H1 (cell line): ENCODE measurements at regions of chr4 and their contacts with region 1.

Region 1: GRCh38 chr4:140326395-140326993 is 47.0 kb upstream of the SCOC start:
- DNase-seq: no peak
- H3K4me3 ChIP-seq: no peak overlapping the region
- H3K27ac ChIP-seq: no peak overlapping the region
- H3K4me1 ChIP-seq: no peaks in the 10 kb centered on the region
- H3K27me3 ChIP-seq: no peaks in the 10 kb centered on the region
- CTCF ChIP-seq: peak; percentile 11 to 63 (median 63)
- EP300 ChIP-seq: no peak
- POLR2A ChIP-seq: no peak
- RAD21 ChIP-seq: peak; percentile 77 to 81

Region 2: DNA sequence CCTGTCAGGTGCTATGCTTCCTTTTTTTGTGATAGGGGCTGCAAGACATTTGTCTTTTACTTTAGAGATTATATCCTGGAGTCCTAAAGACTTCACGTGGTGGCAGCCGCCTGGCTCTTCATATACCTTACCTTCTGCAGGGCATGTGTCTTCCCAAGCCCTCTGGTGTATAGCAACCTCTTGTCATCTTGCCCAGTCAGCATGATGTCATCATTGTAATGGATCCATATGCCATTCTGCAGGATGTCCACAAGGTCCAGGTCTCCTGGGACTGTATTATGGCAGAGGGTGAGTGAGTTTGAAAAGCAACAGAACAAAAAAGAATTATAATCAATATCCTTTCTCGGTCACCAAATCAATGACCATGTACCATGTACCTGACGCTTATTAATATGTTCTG is 35.2 kb before region 1 on chr4:
- CTCF ChIA-PET with region 1: interaction called, 10 read pairs
- POLR2A ChIA-PET with region 1: no interaction called
- DNase-seq: no peak
- H3K4me3 ChIP-seq: no peak overlapping the region
- H3K27ac ChIP-seq: no peak overlapping the region
- H3K4me1 ChIP-seq: no peaks in the 10 kb centered on the region
- H3K27me3 ChIP-seq: no peaks in the 10 kb centered on the region
- CTCF ChIP-seq: no peak
- EP300 ChIP-seq: no peak
- POLR2A ChIP-seq: no peak
- RAD21 ChIP-seq: no peak

Region 3: GRCh38 chr4:140308366-140309123 is 17.9 kb before region 1 on chr4:
- CTCF ChIA-PET with region 1: interaction called, 40 read pairs
- POLR2A ChIA-PET with region 1: no interaction called
- DNase-seq: no peak
- H3K4me3 ChIP-seq: no peak overlapping the region
- H3K27ac ChIP-seq: no peak overlapping the region
- H3K4me1 ChIP-seq: no peaks in the 10 kb centered on the region
- H3K27me3 ChIP-seq: peaks cover 0 to 3% (median under 1%) of the 10 kb centered on the region in 4 experiments; a peak in 3 of 7 replicates
- CTCF ChIP-seq: no peak
- EP300 ChIP-seq: no peak
- POLR2A ChIP-seq: no peak
- RAD21 ChIP-seq: no peak

Region 4: GRCh38 chr4:140315970-140316369 is 10.5 kb before region 1 on chr4:
- CTCF ChIA-PET with region 1: interaction called, 20 read pairs
- POLR2A ChIA-PET with region 1: no interaction called
- DNase-seq: peak in 1 of 2 experiments; percentile 41
- H3K4me3 ChIP-seq: peak overlapping the region in 1 of 4 experiments; percentile 9; a peak in 2 of 8 replicates
- H3K27ac ChIP-seq: no peak overlapping the region
- H3K4me1 ChIP-seq: peaks cover 0 to 12% (median 5%) of the 10 kb centered on the region in 4 experiments; a peak in 6 of 7 replicates
- H3K27me3 ChIP-seq: peaks cover 10 to 31% (median 28%) of the 10 kb centered on the region in 4 experiments
- CTCF ChIP-seq: no peak
- EP300 ChIP-seq: no peak
- POLR2A ChIP-seq: no peak
- RAD21 ChIP-seq: no peak

Region 5: DNA sequence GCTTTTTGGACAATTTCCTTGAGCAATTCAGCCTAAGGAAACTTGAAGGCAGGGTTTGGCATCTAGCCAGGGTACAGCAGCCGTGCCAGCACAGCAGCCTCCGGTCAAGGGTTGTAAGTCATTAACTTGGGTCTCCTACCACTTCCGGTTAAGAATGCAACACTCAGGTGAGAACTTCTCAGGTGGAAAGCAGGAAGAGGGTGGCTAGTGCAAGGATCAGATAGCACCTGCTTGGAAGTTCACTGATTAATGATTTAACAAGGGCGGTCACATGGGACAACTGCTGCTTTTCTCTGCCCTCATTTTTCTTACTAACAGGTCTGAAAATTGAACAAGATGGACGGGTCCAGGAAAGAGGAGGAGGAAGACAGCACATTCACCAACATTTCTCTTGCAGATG is 16.8 kb after region 1 on chr4:
- CTCF ChIA-PET with region 1: interaction called, 15 read pairs
- POLR2A ChIA-PET with region 1: no interaction called
- DNase-seq: no peak
- H3K4me3 ChIP-seq: no peak overlapping the region
- H3K27ac ChIP-seq: no peak overlapping the region
- H3K4me1 ChIP-seq: peaks cover 0 to 12% (median 6%) of the 10 kb centered on the region in 4 experiments; a peak in 5 of 7 replicates
- H3K27me3 ChIP-seq: peaks cover 0 to 1% (median 0%) of the 10 kb centered on the region in 4 experiments; a peak in 2 of 7 replicates
- CTCF ChIP-seq: no peak
- EP300 ChIP-seq: no peak
- POLR2A ChIP-seq: no peak
- RAD21 ChIP-seq: no peak

Region 6: DNA sequence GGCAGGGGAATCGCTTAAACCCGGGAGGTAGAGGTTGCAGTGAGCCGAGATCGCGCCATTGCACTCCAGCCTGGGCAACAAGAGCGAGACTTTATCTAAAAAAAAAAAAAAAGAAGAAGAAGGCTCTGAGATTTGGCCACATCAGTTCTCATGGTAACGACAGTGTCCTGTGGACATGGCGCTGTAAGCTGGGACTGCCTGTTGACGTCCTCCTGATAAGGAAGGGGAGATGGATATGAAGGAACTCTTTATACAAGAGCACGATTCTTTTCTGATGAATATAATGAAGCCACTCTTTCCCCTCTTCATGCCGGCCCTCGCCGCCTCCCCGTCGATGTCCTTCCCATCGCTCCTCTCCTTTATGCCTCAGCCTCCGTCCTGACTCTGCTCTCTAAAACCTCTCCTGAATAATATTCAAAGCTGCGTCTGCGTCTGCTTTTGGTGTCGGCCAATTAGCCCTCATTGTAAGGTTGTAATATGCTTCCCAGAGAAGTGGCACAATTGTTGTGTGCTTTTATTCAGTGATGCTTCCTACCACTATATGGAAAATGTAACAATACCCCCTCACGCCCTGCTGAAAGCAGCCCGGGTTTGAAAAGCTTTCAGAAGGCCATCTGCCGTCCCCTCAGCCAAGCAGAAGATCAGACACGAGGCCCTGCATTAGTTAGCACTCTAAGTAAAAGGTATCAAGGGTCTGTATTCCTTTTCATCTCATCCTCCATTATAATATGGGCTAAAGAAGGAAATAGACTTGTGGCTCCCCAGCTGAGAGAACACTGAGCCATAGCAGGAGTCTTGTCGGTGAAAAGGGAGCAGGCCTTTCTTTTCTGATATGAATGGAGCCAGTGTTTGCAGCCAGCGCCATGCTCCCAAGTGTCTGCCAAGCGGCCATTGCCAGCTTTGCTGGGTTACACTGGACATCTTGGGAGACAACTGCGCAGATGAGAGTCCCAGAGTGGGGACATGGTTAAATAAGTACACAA is 24.9 kb after region 1 on chr4:
- CTCF ChIA-PET with region 1: interaction called, 12 read pairs
- POLR2A ChIA-PET with region 1: no interaction called
- DNase-seq: no peak
- H3K4me3 ChIP-seq: no peak overlapping the region
- H3K27ac ChIP-seq: no peak overlapping the region
- H3K4me1 ChIP-seq: peaks cover 0 to 8% (median 4%) of the 10 kb centered on the region in 4 experiments; a peak in 3 of 7 replicates
- H3K27me3 ChIP-seq: peaks cover 0 to 1% (median 0%) of the 10 kb centered on the region in 4 experiments; a peak in 2 of 7 replicates
- CTCF ChIP-seq: no peak
- EP300 ChIP-seq: no peak
- POLR2A ChIP-seq: no peak
- RAD21 ChIP-seq: no peak

Region 7: GRCh38 chr4:140367738-140368137 is 41.2 kb after region 1 on chr4:
- CTCF ChIA-PET with region 1: interaction called, 10 read pairs
- POLR2A ChIA-PET with region 1: no interaction called
- DNase-seq: no peak
- H3K4me3 ChIP-seq: no peak overlapping the region
- H3K27ac ChIP-seq: no peak overlapping the region
- H3K4me1 ChIP-seq: peaks cover 0 to 4% (median 0%) of the 10 kb centered on the region in 4 experiments; a peak in 1 of 7 replicates
- H3K27me3 ChIP-seq: 0 out of 7 replicates have a peak, but pooled peaks cover 0 to 2% (median 0%) of the 10 kb centered on the region in 4 experiments
- CTCF ChIP-seq: no peak
- EP300 ChIP-seq: no peak
- POLR2A ChIP-seq: no peak
- RAD21 ChIP-seq: no peak